ENCODE measurements at regions of chr16 and their contacts with region 1.

Region 1: GRCh38 chr16:19607616-19608280 is 52.2 kb downstream of the VPS35L start:
- DNase-seq: peak; percentile 73 to 85
- H3K4me3 ChIP-seq: no peak overlapping the region
- H3K27ac ChIP-seq: peak overlapping the region; percentile 38; the same call in 1 of the 2 replicates
- H3K4me1 ChIP-seq: peaks cover 52% of the 10 kb centered on the region
- H3K27me3 ChIP-seq: no peaks in the 10 kb centered on the region
- CTCF ChIP-seq: no peak

Region 2: GRCh38 chr16:19463487-19463886 is 144.3 kb before region 1 on chr16:
- CTCF ChIA-PET with region 1: no interaction called
- POLR2A ChIA-PET with region 1: no interaction called
- intact Hi-C with region 1: no loop called
- DNase-seq: no peak
- H3K4me3 ChIP-seq: no peak overlapping the region
- H3K27ac ChIP-seq: no peak overlapping the region
- H3K4me1 ChIP-seq: no peaks in the 10 kb centered on the region
- H3K27me3 ChIP-seq: no peaks in the 10 kb centered on the region
- CTCF ChIP-seq: no peak

Region 3: DNA sequence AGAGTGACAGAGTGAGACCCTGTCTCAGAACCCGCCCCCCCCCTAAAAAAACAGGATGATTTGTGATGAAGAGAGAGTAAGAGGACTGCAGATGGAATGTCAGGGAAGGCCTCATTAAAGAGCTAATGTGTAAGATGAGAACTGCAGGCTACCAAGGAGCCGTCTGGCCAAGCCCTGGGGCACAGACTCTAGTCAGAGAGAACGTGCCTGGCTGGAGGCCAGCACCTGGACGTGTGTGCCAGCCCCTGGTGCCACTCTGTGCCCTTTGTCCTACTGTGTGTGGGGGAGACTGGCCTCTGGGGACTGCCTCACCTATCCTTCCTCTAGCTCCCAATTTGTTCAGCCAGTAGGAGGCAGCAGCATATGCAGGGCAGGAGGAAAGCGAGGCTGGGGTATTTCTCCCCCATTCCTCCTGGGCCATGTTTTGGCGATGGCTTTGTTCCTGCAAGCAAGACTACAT is 73.2 kb after region 1 on chr16:
- CTCF ChIA-PET with region 1: no interaction called
- POLR2A ChIA-PET with region 1: no interaction called
- intact Hi-C with region 1: loop called (anchors 5 kb)
- DNase-seq: peak; percentile 48 to 70
- H3K4me3 ChIP-seq: no peak overlapping the region
- H3K27ac ChIP-seq: no peak overlapping the region
- H3K4me1 ChIP-seq: peaks cover 9% of the 10 kb centered on the region
- H3K27me3 ChIP-seq: no peaks in the 10 kb centered on the region
- CTCF ChIP-seq: 0 out of 2 replicates have a peak, but pooled peaks have one; percentile 23

Region 4: DNA sequence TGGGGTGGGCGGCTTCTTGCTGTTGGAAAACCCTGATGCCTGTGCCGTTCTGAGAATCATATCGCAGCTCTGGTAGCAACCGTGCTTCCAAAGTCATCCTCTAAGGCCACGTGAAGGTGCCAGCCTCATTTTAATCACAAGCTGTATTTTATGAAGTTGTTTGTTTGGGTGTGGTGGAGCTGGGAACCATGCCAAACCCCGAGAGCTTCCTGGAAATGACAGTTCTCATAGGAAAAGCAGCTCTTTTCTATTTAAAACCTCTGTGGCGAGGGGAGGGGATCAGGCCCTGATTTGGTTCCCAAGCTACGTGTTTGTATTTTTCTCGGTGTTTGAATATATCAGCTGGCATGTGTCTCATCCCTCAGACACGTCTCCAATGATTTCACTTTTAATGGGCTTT is 88.6 kb after region 1 on chr16:
- CTCF ChIA-PET with region 1: no interaction called
- POLR2A ChIA-PET with region 1: interaction called, 10 read pairs
- intact Hi-C with region 1: loop called (anchors 1 kb)
- DNase-seq: peak; percentile 56 to 80
- H3K4me3 ChIP-seq: no peak overlapping the region
- H3K27ac ChIP-seq: no peak overlapping the region
- H3K4me1 ChIP-seq: peaks cover 22% of the 10 kb centered on the region
- H3K27me3 ChIP-seq: no peaks in the 10 kb centered on the region
- CTCF ChIP-seq: no peak

Region 5: DNA sequence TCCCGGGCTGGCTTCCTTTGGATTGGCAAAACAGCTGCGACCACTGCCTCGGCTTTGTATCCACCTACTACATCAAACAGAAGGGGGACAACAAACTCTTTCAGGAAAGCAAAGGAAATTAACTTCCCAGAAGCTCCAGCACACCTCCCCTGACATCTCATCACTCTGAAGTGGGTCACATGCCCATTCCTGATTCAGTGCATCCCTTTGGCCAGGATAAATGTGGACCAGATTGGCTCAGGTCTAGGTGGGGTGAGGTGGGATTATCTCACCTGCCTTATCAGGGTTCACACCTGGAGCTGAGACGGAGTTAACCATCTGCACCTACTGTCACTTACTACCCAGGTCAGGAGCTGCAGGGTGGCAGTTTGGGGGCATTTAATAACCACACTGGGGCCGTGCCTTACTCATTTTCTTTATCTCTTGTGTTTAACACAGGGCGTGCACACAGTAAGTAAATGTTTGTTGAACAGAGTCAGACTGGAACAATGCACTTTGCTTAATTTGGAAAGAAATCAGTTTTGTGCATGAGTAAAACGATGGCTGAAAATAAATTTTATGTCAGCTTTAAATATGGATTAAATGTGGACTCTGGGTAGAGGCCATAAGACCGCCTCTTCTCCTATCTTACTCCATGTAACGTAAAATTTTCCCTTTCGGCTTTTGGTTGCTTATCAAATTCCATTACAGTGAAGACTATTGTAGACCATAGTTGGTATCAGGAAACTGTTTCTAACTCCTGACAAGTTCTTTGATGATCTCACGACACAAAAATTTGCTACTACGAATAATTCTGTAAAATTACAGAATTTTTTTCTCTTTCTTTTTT is 146.3 kb after region 1 on chr16:
- CTCF ChIA-PET with region 1: no interaction called
- POLR2A ChIA-PET with region 1: interaction called, 4 read pairs
- intact Hi-C with region 1: loop called (anchors 1 kb)
- DNase-seq: peak; percentile 49 to 91
- H3K4me3 ChIP-seq: no peak overlapping the region; the same call in 1 of the 2 replicates
- H3K27ac ChIP-seq: peak overlapping the region; percentile 93
- H3K4me1 ChIP-seq: peaks cover 58% of the 10 kb centered on the region
- H3K27me3 ChIP-seq: no peaks in the 10 kb centered on the region
- CTCF ChIP-seq: no peak

Measured in PC-9 (cell line).